Common myeloid progenitor, CD34-positive (primary cell): ENCODE measurements at regions of chr14 and their contacts with region 1.

Region 1: GRCh38 chr14:99982537-99983250 is 82.5 kb upstream of the EVL start:
- DNase-seq: peak; percentile 64 to 78 (median 71)
- H3K4me3 ChIP-seq: peak overlapping the region in 1 of 7 experiments; percentile 20
- H3K27ac ChIP-seq: no peak overlapping the region
- H3K4me1 ChIP-seq: peaks cover 0 to 21% (median 14%) of the 10 kb centered on the region in 4 experiments
- H3K27me3 ChIP-seq: no peaks in the 10 kb centered on the region

Region 2: GRCh38 chr14:99718031-99718810 is 264.5 kb before region 1 on chr14:
- CTCF ChIA-PET with region 1: no interaction called
- POLR2A ChIA-PET with region 1: no interaction called
- DNase-seq: no peak
- H3K4me3 ChIP-seq: no peak overlapping the region
- H3K27ac ChIP-seq: no peak overlapping the region
- H3K4me1 ChIP-seq: no peaks in the 10 kb centered on the region
- H3K27me3 ChIP-seq: peaks cover 0 to 71% (median 14%) of the 10 kb centered on the region in 5 experiments

Region 3: GRCh38 chr14:99862136-99862535 is 120.6 kb before region 1 on chr14:
- CTCF ChIA-PET with region 1: no interaction called
- POLR2A ChIA-PET with region 1: no interaction called
- DNase-seq: no peak
- H3K4me3 ChIP-seq: peak overlapping the region in 1 of 7 experiments; percentile 5
- H3K27ac ChIP-seq: no peak overlapping the region
- H3K4me1 ChIP-seq: no peaks in the 10 kb centered on the region
- H3K27me3 ChIP-seq: peaks cover 5 to 80% (median 9%) of the 10 kb centered on the region in 5 experiments

Region 4: GRCh38 chr14:99971941-99972747 is 10.6 kb before region 1 on chr14:
- CTCF ChIA-PET with region 1: interaction called, 21 read pairs
- POLR2A ChIA-PET with region 1: no interaction called
- DNase-seq: peak in 2 of 3 donors; percentile 40 to 55
- H3K4me3 ChIP-seq: peak overlapping the region; percentile 70 to 85 (median 81)
- H3K27ac ChIP-seq: no peak overlapping the region
- H3K4me1 ChIP-seq: peaks cover 7 to 12% (median 9%) of the 10 kb centered on the region in 4 experiments
- H3K27me3 ChIP-seq: peaks cover 0 to 22% (median 8%) of the 10 kb centered on the region in 5 experiments

Region 5: GRCh38 chr14:99995700-99996356 is 13.1 kb after region 1 on chr14:
- CTCF ChIA-PET with region 1: interaction called, 12 read pairs
- POLR2A ChIA-PET with region 1: no interaction called
- DNase-seq: peak; percentile 80 to 87 (median 87)
- H3K4me3 ChIP-seq: no peak overlapping the region
- H3K27ac ChIP-seq: no peak overlapping the region
- H3K4me1 ChIP-seq: no peaks in the 10 kb centered on the region
- H3K27me3 ChIP-seq: no peaks in the 10 kb centered on the region

Region 6: GRCh38 chr14:100019156-100019744 is 36.6 kb after region 1 on chr14:
- CTCF ChIA-PET with region 1: interaction called, 76 read pairs
- POLR2A ChIA-PET with region 1: no interaction called
- DNase-seq: peak in 2 of 3 donors; percentile 41 to 58
- H3K4me3 ChIP-seq: no peak overlapping the region
- H3K27ac ChIP-seq: no peak overlapping the region
- H3K4me1 ChIP-seq: peaks cover 0 to 27% (median 9%) of the 10 kb centered on the region in 4 experiments
- H3K27me3 ChIP-seq: no peaks in the 10 kb centered on the region

Region 7: GRCh38 chr14:100025111-100025510 is 42.4 kb after region 1 on chr14:
- CTCF ChIA-PET with region 1: interaction called, 76 read pairs
- POLR2A ChIA-PET with region 1: no interaction called
- DNase-seq: peak; percentile 47 to 70 (median 60)
- H3K4me3 ChIP-seq: no peak overlapping the region
- H3K27ac ChIP-seq: no peak overlapping the region
- H3K4me1 ChIP-seq: peaks cover 0 to 14% (median 3%) of the 10 kb centered on the region in 4 experiments
- H3K27me3 ChIP-seq: no peaks in the 10 kb centered on the region

Region 8: DNA sequence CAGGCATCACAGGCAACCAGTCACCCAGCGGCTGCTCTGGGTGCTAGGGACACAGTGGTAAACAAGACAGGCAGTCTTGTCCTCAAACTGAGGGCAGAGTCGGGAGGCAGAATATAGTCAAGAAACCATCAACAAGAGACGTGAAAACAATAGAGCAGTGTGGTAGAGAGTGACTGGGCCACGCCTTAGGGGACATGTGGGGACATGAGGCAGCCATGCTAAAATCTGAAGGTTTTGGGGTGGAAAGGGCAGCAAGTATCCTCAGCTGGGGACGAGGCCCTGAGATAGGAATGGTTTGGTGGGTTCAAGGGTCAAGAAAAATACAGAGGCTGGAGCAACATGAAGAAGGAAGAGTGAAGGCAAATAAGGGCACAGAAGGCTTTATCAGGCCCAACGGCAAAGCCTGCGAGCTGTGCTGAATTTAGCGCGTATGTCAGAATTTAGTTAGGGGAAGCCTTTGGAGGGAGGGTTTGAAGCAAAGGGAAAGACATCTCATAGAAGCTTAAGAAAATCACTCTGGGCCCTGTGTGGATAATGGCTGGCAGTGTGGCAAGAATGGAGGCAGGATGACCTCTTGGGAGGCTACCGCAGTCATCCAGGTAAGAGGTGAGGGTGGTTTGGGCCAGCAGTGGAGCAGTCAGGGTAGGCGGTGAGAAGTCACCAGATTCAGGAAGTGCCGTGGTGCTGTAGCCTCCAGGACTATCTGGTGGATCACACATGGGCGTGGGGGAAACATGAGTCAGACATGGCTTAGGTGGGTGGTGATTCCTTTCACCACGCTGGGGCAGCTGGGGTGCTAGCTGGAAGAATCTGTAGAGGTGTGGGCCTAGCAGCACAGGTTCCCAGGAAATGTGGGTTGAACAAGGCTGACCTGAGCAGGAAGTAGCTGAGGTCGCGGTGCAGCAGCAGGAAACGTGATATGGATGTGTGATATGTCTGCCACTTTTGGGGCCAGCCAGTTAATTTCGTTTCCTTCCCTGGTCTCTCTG is 85.6 kb after region 1 on chr14:
- CTCF ChIA-PET with region 1: interaction called, 14 read pairs
- POLR2A ChIA-PET with region 1: interaction called, 4 read pairs
- DNase-seq: peak; percentile 93 to 99 (median 98)
- H3K4me3 ChIP-seq: peak overlapping the region in 5 of 7 experiments; percentile 9 to 64 (median 44)
- H3K27ac ChIP-seq: peak overlapping the region; percentile 82 to 92
- H3K4me1 ChIP-seq: peaks cover 50 to 100% (median 98%) of the 10 kb centered on the region in 4 experiments
- H3K27me3 ChIP-seq: no peaks in the 10 kb centered on the region

Region 9: GRCh38 chr14:100108042-100108825 is 125.5 kb after region 1 on chr14:
- CTCF ChIA-PET with region 1: interaction called, 59 read pairs
- POLR2A ChIA-PET with region 1: interaction called, 3 read pairs
- DNase-seq: peak; percentile 80 to 88 (median 84)
- H3K4me3 ChIP-seq: no peak overlapping the region
- H3K27ac ChIP-seq: no peak overlapping the region
- H3K4me1 ChIP-seq: peaks cover 6 to 48% (median 42%) of the 10 kb centered on the region in 4 experiments
- H3K27me3 ChIP-seq: no peaks in the 10 kb centered on the region